RWPE1 (cell line): ENCODE measurements at regions of chr5 and their contacts with region 1.

Region 1: DNA sequence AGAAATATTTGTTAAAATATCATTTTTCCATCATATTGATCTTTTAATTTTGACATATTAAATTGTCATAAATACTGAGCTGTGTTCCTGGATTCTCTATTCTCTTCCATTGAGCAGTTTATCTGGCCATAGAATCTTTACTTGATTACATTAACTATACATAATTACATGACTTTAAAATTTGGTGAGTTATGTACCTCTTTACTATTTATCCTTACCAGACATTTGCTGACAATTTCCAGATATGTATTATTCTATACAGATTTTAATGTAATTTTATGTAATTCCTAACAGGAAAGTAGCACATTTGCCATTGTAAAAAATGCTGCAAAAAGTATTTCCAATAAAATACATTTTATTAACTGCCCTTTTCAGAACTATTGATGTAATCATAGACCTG is 770.3 kb downstream of the KCTD16 start:
- DNase-seq: no peak
- H3K27ac ChIP-seq: no peak overlapping the region
- CTCF ChIP-seq: no peak

Region 2: DNA sequence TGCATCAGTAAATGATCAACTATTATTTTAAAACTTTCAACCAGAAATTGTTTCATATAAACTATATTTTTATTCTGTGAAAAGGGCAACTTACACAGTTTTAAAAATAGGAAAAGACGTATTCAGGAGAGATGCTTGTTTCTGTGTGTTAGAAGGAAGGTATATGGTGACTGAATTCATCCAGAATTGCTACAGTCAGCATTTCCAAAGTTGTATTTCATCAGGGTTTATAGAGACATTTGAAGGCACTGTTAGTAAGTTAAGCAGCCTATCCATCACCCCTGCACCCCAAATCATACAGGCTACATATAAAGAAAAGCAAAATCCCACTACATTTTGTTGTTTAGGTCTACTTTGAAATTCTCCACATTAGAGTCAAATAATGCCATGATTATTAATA is 54.3 kb before region 1 on chr5:
- CTCF ChIA-PET with region 1: no interaction called
- POLR2A ChIA-PET with region 1: no interaction called
- DNase-seq: no peak
- H3K27ac ChIP-seq: no peak overlapping the region
- CTCF ChIP-seq: no peak

Region 3: DNA sequence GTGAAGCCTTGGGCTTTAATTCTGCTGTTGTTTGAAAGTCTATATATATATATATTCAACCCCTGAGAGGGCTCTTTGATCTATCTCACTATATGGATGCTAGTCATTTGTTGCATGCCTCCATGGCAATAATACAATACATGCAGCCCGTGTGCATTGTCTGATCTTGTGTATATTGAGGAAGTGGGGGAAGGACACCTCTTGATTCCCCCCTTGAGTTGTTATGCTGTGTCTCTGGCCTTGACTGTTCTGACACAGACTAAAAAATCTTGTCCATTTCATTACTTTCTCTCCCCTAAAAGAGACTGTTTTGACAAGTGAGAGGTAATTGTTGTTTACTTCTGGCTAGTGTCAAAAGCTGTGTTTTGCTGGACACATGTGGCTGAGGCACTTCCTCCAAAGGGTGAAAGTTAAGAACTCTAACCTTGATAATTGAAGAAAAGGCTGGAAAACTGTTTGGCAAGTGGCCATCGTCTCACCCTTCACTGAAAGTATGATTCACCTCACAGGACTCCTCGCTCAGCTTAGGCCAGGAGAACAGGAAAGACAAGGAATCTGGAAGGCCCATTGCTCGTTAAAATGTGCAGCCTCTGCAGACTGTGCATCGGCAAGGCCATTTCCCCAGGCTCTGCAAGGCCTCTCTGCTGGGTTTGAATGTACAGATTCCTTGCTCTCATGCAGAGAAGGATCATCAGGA is 590.2 kb after region 1 on chr5:
- CTCF ChIA-PET with region 1: interaction called, 10 read pairs
- POLR2A ChIA-PET with region 1: no interaction called
- DNase-seq: peak; percentile 92
- H3K27ac ChIP-seq: peak overlapping the region; percentile 50
- CTCF ChIP-seq: no peak